GM12878 (cell line): ENCODE measurements at regions of chr5 and their contacts with region 1.

Region 1: DNA sequence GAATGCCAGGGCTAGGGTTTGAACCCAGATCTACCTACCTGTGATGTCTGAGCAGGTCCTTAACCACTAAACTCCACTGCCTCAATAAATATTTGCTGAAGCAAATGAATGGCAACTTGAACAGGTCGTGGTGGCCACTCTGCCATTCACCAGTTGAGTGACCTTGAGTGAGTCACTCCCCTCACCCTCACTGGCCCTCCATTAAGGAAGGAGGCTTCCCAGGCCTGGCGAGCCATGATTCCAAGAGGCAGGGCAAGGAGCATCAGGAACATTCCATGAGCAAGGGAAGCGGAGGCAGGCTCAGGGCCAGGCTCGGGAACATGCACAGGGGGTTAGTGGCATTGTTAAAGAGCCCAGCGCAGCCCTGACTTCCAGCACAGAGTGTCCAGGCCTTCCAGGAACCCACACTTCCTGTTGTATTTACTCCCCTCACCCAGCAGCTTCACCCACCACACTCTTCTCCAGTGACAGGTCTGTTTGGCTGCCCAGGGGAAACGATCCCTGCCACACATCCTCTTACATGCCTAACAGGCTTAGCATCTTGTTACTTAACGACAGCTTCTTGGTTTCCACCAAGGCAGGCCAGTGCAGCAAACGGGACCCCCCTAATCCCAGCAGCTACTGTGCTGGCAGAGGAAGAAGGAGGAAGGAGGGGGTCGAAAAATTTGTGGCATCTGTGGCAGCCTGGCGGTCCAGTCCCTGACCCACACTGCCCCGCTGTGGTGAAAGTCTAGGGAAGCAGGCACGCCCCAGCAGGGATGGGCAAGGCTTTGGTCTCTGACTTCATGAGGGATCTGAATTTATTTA is 43.7 kb upstream of the TTC1 start:
- DNase-seq: no peak
- ATAC-seq: peak; percentile 91
- H3K4me3 ChIP-seq: no peak overlapping the region
- H3K27ac ChIP-seq: no peak overlapping the region
- H3K4me1 ChIP-seq: no peaks in the 10 kb centered on the region
- H3K27me3 ChIP-seq: 0 out of 4 replicates have a peak, but pooled peaks cover 0 to 4% of the 10 kb centered on the region in 2 experiments
- CTCF ChIP-seq: peak; percentile 45 to 68 (median 59)
- EP300 ChIP-seq: no peak
- POLR2A ChIP-seq: no peak
- RAD21 ChIP-seq: peak; percentile 58

Region 2: GRCh38 chr5:159951834-159952233 is 13.4 kb before region 1 on chr5:
- CTCF ChIA-PET with region 1: interaction called, 10 read pairs
- POLR2A ChIA-PET with region 1: no interaction called
- RAD21 ChIA-PET with region 1: interaction called, 4 read pairs
- SMC1A ChIA-PET with region 1: no interaction called
- in situ Hi-C with region 1: no loop called
- intact Hi-C with region 1: no loop called
- DNase-seq: no peak
- ATAC-seq: no peak
- H3K4me3 ChIP-seq: no peak overlapping the region
- H3K27ac ChIP-seq: no peak overlapping the region
- H3K4me1 ChIP-seq: no peaks in the 10 kb centered on the region
- H3K27me3 ChIP-seq: peaks cover 0 to 2% of the 10 kb centered on the region in 2 experiments; a peak in 3 of 4 replicates
- CTCF ChIP-seq: no peak
- EP300 ChIP-seq: no peak
- POLR2A ChIP-seq: no peak
- RAD21 ChIP-seq: no peak